Psoas muscle (tissue), 8 donors: ENCODE measurements at regions of chr11 and their contacts with region 1.

Region 1: DNA sequence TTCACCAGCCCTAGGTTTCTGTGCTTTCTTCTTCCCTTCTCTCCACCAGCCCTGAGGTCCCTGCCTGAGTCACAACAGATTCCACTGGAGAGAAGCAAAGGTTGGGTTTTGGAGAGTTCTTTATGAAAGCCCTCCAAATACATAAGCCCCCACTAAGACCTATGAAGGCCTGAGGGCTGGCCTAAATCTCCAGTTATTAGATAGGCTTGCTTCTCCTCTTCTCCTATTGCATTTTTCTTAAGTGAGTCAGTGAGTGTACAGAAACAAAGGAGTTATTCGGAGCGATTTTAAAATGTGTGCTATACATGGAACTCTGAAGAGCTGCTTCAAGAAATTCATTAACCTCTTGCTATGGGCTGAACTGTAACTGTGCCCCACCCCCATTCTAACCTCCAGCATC is 1057.3 kb downstream of the OPCML start:
- DNase-seq: no peak
- ATAC-seq: no peak
- H3K4me3 ChIP-seq: no peak overlapping the region
- H3K27ac ChIP-seq: no peak overlapping the region
- H3K4me1 ChIP-seq: no peaks in the 10 kb centered on the region
- H3K27me3 ChIP-seq: no peaks in the 10 kb centered on the region
- CTCF ChIP-seq: no peak

Region 2: DNA sequence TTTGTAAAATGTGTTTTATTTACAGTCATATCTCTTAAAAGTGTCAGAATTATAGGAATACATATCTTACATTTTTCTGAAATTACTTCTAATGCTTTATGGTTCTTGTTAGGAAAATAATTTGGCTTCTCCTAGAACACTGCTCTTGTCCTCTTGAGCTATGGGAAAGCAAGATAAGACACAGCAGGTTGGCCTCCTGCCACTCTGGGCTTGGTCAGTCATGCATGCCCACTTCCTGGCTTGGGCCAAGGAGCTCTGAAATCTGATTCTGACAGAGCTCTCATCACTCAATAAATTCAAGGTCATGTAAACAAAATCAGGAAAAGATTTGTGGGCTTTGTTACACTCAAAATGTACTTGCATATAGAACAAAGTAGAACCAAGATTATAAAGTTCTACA is 21.3 kb after region 1 on chr11:
- intact Hi-C with region 1: loop called in 1 of 2 experiments (anchors 1 kb)
- DNase-seq: no peak
- ATAC-seq: no peak
- H3K4me3 ChIP-seq: no peak overlapping the region
- H3K27ac ChIP-seq: no peak overlapping the region
- H3K4me1 ChIP-seq: no peaks in the 10 kb centered on the region
- H3K27me3 ChIP-seq: no peaks in the 10 kb centered on the region
- CTCF ChIP-seq: no peak

Region 3: GRCh38 chr11:132576706-132577105 is 101.7 kb after region 1 on chr11:
- intact Hi-C with region 1: no loop called
- DNase-seq: no peak
- ATAC-seq: no peak
- H3K4me3 ChIP-seq: no peak overlapping the region
- H3K27ac ChIP-seq: no peak overlapping the region
- H3K4me1 ChIP-seq: no peaks in the 10 kb centered on the region
- H3K27me3 ChIP-seq: no peaks in the 10 kb centered on the region
- CTCF ChIP-seq: no peak